ENCODE measurements at regions of chr10 and their contacts with region 1.

Region 1: GRCh38 chr10:86836044-86836443 is 79.6 kb downstream of the BMPR1A start:
- DNase-seq: peak; percentile 25
- ATAC-seq: peak; percentile 94
- H3K4me3 ChIP-seq: no peak overlapping the region
- H3K27ac ChIP-seq: no peak overlapping the region
- H3K4me1 ChIP-seq: no peaks in the 10 kb centered on the region; the same call in 1 of the 2 replicates
- H3K27me3 ChIP-seq: no peaks in the 10 kb centered on the region
- CTCF ChIP-seq: no peak

Region 2: DNA sequence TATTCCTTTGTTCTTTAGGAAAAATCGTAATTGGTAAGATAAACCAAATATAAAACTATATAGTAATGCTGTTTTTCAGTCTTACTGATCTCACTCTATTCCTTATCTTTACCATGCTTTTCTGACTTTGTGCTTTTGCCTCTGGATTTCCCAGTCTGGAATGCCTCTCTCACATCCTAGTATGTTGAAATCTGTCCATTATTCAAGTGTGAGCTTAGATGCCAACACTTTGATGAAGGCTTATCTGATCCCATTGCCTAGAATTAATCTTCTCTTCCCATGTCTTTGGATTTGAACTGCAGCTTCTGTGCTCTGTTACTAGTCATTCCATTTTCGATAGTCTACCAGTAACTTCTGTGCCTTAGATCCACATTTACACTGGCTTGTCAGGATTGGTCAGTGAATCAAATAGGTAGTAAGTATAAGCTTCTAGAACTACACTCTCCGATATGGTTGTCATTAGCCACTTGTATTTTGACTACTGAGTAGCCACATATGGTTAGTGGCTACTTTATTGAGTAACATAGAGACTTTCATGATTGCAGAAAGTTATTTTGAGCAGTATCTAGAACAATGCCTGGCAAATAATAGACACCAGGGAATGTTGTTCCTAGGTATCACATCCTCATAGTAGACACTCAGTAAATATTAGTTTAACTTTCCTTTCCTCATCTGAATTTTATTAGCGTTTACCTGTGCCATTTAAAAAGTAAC is 13.3 kb after region 1 on chr10:
- CTCF ChIA-PET with region 1: no interaction called
- POLR2A ChIA-PET with region 1: no interaction called
- intact Hi-C with region 1: loop called (anchors 1 kb)
- DNase-seq: no peak
- ATAC-seq: peak; percentile 83
- H3K4me3 ChIP-seq: no peak overlapping the region
- H3K27ac ChIP-seq: no peak overlapping the region
- H3K4me1 ChIP-seq: peaks cover 18% of the 10 kb centered on the region
- H3K27me3 ChIP-seq: no peaks in the 10 kb centered on the region
- CTCF ChIP-seq: no peak

Region 3: DNA sequence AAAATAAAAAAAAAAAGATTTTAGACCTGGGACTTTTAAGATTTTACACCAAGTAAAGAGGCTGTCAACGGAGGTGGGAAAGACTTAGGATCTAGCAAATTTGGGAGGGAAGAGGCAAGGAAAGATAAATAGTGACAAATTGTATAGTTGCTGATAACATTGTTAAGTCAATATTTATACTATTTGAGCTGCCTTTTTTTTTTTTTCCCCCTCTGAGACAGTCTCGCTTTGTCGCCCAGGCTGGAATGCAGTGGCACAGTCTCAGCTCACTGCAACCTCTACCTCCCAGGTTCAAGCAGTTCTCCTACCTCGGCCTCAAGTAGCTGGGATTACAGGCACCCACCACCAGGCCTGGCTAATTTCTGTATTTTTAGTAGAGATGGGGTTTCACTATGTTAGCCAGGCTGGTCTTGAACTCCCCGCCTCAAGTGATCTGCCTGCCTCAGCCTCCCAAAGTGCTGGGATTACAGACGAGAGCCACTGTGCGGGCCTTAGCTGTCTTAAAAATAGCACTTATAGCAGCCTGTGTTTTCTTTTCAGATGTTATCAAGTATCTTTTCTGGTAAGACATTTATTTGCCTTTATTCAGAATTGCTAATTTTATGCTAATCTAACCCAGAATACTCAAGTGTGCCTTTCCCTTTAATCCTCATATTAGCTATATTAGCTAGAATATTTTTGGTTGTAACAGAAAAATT is 26.9 kb after region 1 on chr10:
- CTCF ChIA-PET with region 1: no interaction called
- POLR2A ChIA-PET with region 1: interaction called, 12 read pairs
- intact Hi-C with region 1: no loop called
- DNase-seq: peak; percentile 19
- ATAC-seq: peak; percentile 22
- H3K4me3 ChIP-seq: no peak overlapping the region
- H3K27ac ChIP-seq: no peak overlapping the region
- H3K4me1 ChIP-seq: peaks cover 9% of the 10 kb centered on the region
- H3K27me3 ChIP-seq: no peaks in the 10 kb centered on the region
- CTCF ChIP-seq: no peak

Measured in PC-3 (cell line).